Activated T-helper 1 cell treated with anti-CD3 and anti-CD28 coated beads, Interleukin-12 subunit alpha, Interleukin-12 subunit beta, Interleukin-2, Interleukin-4 antibody, amounts not matched to agents 30 ng/mL and 10 ng/mL and 1 ng/mL, durations not matched to agents 14 hours and 24 hours and 36 hours (primary cell): ENCODE measurements at regions of chr17 and their contacts with region 1.

Region 1: GRCh38 chr17:59427425-59427921 is 96.0 kb downstream of the YPEL2 start:
- DNase-seq: no peak
- H3K4me3 Mint-ChIP-seq: no peak overlapping the region
- H3K27ac Mint-ChIP-seq: no peak overlapping the region
- H3K4me1 Mint-ChIP-seq: peaks cover 25% of the 10 kb centered on the region
- H3K27me3 Mint-ChIP-seq: no peaks in the 10 kb centered on the region

Region 2: GRCh38 chr17:59311130-59311920 is 116.1 kb before region 1 on chr17:
- intact Hi-C with region 1: loop called (anchors 1 kb)
- DNase-seq: peak; percentile 40
- H3K4me3 Mint-ChIP-seq: no peak overlapping the region
- H3K27ac Mint-ChIP-seq: no peak overlapping the region
- H3K4me1 Mint-ChIP-seq: peaks cover 8% of the 10 kb centered on the region
- H3K27me3 Mint-ChIP-seq: no peaks in the 10 kb centered on the region

Region 3: DNA sequence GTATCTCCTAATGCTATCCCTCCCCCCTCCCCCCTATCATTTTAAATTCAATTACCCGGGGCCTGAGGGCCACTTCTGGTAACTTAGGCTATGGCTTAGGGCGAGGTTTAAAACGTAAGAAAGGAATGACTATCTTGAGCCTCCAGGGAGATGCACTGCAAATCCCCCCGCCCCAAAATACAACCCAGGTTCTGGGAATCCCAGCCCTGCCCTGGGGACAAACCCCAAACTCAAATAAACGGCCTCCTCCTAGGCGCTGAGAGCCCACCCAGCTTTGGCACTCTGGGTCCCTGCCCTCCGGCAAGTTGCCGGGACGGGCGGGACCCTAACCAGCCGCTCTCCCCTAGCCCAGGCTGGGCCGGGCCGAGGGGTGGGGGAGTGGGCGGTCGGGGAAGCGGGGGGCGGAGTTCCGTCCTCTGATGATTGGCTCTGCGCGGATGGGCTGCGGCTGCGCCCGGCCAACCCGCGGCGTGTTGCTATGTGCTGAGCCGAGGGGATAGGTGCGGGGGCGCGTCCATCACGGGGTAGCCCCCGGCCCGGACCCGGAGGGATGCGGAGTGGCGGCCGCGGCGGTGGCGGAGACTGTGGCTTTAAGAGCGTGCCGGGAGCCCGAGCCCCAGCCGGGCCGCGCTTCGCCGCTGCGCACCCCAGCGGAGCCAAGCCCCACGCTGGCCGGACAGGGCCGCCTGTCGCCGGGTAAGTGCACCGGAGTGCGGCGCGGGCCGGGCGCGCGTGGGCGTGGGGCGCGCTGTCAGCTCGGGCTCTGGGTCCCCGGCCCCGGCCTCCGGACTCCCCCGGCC is 96.1 kb before region 1 on chr17 and contains the start of gene YPEL2:
- intact Hi-C with region 1: loop called (anchors 1 kb)
- DNase-seq: peak; percentile 88
- H3K4me3 Mint-ChIP-seq: peak within 1 kb of the TSS; percentile 89
- H3K27ac Mint-ChIP-seq: peak within 1 kb of the TSS; percentile 77
- H3K4me1 Mint-ChIP-seq: peaks cover 52% of the 10 kb centered on the region
- H3K27me3 Mint-ChIP-seq: peaks cover 27% of the 10 kb centered on the region
- total RNA-seq, gene YPEL2: 7.4 and 7.9 TPM in 2 replicates

Region 4: DNA sequence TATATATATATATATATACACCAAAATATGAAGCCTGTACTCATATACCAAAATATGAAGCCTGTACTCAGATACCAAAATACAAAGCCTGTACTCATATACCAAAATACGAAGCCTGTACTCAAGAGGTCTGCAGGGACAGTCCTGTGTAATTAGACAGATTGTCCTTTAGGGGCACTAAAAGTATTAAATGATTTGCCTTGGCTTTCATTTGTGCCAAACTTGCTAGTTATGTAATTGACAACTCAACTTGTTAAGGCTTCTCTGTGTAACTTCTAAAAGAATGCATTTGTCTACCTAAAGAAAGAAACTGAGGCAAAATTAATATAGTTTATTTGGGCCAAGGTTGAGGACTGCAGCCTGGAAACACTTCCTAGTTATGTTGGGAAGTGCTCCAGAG is 107.1 kb after region 1 on chr17:
- intact Hi-C with region 1: no loop called
- DNase-seq: no peak
- H3K4me3 Mint-ChIP-seq: no peak overlapping the region
- H3K27ac Mint-ChIP-seq: no peak overlapping the region
- H3K4me1 Mint-ChIP-seq: no peaks in the 10 kb centered on the region
- H3K27me3 Mint-ChIP-seq: peaks cover 22% of the 10 kb centered on the region

Region 5: DNA sequence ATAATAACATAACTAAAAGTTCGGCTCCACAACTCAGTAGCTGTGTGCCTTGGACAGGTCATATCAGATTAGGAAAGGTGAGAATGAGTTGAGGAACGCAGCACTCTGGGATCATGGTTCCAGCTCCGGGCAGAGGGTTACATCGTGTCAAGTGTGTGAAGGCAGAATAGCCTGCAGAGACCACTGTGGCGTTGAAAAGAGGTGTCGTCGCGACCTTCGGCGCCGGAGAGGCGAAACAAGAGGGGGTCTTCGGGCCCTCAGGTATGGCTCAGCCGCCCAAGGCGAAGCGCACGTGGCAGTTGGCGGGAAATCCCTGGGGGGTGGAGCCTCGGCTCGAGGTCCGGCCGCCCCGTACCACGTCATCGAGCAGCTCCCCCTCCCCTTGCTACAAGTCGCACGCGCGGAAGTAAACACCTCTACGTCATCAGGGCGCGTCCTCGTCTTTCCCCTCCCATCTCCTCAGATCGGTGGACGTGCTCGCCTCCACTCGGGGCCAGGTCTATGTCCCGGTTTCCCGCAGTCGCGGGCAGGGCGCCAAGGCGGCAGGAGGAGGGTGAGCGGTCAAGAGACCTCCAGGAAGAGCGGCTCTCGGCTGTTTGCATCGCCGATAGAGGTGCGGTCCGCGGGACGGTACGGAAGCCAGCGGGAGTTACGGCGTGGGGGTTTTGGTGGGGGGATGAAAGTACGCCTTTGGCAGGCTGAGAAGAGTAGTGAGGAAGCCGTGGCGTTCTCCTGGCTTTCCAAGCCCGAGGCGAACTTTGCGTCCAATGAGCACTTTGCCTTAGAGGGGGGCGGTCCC is 137.9 kb after region 1 on chr17 and contains the start of gene DHX40:
- intact Hi-C with region 1: no loop called
- DNase-seq: peak; percentile 90
- H3K4me3 Mint-ChIP-seq: peak within 1 kb of the TSS; percentile 100
- H3K27ac Mint-ChIP-seq: peak within 1 kb of the TSS; percentile 100
- H3K4me1 Mint-ChIP-seq: peaks cover 24% of the 10 kb centered on the region
- H3K27me3 Mint-ChIP-seq: peaks cover 7% of the 10 kb centered on the region
- total RNA-seq, gene DHX40: 16.8 and 17.1 TPM in 2 replicates